Right ventricle myocardium inferior (tissue), 1 donor: ENCODE measurements at regions of chr16 and their contacts with region 1.

Region 1: GRCh38 chr16:84617791-84618580 is at the start of gene COTL1:
- DNase-seq: peak; percentile 99
- ATAC-seq: peak; percentile 91
- total RNA-seq, gene COTL1: 18.4 TPM

Region 2: GRCh38 chr16:84504420-84505248 is 113.4 kb before region 1 on chr16 and contains the start of gene MEAK7:
- intact Hi-C with region 1: loop called (anchors 2 kb)
- DNase-seq: peak; percentile 99
- ATAC-seq: peak; percentile 98
- total RNA-seq, gene MEAK7: 7.4 TPM

Region 3: DNA sequence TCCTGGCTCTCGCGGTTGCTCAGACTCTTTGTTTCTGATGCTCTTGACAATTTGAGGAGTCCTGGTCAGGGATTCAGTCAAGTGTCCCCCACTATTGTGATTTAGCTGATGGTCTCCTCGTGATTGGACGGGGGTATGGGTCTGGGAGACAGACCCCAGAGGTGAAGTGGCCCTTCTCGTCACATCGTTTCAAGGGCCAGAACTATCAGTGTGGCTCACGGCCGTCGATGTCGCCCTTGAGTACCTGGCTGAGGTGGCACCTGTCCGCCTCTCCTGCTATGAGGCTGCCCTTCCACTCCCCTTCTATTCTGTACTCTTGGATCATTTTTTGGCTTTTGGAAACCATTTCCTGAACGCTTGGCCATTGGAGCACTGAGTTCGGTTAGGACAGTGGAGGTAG is 106.2 kb before region 1 on chr16:
- intact Hi-C with region 1: loop called (anchors 1 kb)
- DNase-seq: no peak
- ATAC-seq: no peak

Region 4: GRCh38 chr16:84532291-84532724 is 85.7 kb before region 1 on chr16:
- intact Hi-C with region 1: loop called (anchors 5 kb)
- DNase-seq: peak; percentile 75
- ATAC-seq: peak; percentile 93

Region 5: GRCh38 chr16:84726079-84726668 is 108.2 kb after region 1 on chr16:
- intact Hi-C with region 1: loop called (anchors 2 kb)
- DNase-seq: peak; percentile 95
- ATAC-seq: peak; percentile 85

Region 6: DNA sequence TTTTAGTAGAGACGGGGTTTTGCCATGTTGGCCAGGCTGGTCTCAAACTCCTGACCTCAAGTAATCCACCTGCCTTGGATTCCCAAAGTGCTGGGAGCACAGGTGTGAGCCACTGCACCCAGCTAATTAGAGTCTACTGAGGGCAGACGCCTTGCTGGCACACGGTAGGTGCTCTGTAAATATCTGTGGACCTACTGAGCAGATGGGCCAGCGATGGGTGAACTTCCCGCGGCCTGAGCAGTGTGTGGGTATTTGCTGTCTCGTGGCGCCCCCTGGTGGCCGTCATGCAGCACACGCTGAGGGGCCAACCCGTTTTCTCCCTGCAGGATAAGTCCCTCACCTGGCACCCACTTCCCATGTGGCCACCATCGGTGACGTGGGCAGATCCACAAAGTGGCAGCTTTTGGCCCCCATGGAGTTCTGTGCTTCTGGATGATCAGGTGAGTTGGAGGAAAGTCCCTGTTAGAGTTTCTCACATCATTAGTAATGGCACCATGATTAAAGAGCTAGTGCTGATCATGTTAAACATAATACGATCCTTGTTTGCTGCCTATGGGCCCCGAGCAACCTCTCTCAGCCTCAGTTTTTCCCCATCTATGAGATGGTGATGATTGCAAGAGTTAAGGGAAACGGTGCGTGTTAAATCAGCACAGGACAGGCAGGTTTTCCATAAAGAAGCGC is 352.6 kb after region 1 on chr16:
- intact Hi-C with region 1: loop called (anchors 5 kb)
- DNase-seq: peak; percentile 94
- ATAC-seq: peak; percentile 78